ENCODE measurements at regions of chrX and their contacts with region 1.

Region 1: DNA sequence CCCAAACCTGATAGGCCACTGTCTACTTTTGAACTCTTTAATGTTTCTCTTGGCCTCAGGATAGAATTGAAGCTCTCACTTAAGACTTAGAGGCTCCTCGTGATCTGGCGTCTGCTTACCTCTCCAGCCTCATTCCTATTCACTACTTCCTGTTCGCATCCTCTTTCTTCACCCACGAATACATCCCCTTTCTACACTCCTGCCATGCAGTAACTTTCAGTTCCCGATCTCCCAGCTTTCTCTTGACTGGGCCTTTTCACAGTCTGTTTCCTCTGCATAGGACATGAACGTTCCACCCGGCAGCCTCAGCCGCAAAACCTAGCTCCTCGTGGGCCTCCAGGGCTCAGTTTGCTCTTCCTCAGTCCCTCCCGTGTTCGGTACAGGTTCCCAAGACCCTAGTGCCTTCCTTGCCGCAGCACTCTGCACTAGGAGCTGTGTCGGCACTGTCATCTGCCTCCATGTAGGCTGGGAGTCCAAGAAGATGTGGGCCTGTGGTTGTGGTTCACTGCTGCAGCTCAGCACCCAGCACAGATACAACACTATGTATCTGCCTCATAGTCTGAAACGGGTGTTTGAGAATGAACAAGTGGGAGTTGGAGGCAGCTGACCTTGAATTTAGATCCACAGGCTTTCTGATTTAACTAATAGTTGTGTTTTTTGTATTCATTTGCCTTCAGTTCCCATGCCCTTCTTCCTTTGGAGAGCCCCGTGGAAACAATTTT is 15.8 kb downstream of the RPL39 start:
- DNase-seq: no peak
- CTCF ChIP-seq: no peak

Region 2: GRCh38 chrX:119516157-119516702 is 259.4 kb before region 1 on chrX:
- CTCF ChIA-PET with region 1: interaction called, 13 read pairs
- POLR2A ChIA-PET with region 1: no interaction called
- DNase-seq: peak; percentile 80
- CTCF ChIP-seq: peak; percentile 55

Region 3: GRCh38 chrX:119669424-119670037 is 106.1 kb before region 1 on chrX:
- CTCF ChIA-PET with region 1: no interaction called
- POLR2A ChIA-PET with region 1: no interaction called
- DNase-seq: no peak
- CTCF ChIP-seq: no peak

Region 4: GRCh38 chrX:119826399-119826959 is 50.8 kb after region 1 on chrX:
- CTCF ChIA-PET with region 1: no interaction called
- POLR2A ChIA-PET with region 1: no interaction called
- DNase-seq: peak; percentile 12
- CTCF ChIP-seq: no peak

Region 5: DNA sequence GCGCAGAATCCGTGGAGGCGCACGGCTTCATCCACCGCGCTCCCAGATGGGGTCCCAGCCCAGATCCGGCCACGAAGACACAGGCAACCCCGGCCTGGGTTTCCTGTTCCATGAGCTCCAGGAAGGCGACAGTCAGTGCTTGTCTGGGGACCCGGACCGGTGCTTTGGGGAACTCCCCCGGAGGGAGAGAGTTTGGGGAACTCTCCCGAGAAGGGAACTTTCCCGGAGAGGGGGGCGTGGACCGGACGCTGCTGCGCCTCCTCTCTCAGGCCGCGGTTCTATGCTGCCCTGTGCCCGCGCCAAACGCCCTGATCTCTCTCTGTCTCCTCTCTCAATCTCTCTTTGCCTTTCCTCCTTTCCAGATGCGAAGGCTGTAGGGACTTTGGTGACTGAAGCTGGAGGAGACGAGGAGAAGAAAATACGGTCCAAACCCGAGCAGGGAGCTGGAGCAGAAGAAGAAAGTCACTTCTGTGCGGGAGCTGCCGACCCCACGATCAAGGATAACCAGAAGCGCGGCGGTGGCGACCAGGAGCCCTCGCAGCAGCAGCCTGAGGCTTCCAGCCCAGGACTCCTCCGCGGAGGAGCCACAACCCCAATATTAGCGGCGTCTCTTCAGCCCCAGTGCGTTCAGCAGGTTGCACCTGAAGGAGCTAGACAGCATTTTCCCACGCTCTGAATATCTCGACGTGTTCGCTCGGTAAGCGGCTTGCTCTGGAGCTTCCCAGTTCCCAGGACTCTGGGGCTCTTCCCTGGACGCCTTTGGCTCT is 215.5 kb after region 1 on chrX:
- CTCF ChIA-PET with region 1: no interaction called
- POLR2A ChIA-PET with region 1: no interaction called
- DNase-seq: peak; percentile 47
- CTCF ChIP-seq: no peak

Region 6: GRCh38 chrX:120015145-120016067 is 239.7 kb after region 1 on chrX:
- CTCF ChIA-PET with region 1: no interaction called
- POLR2A ChIA-PET with region 1: no interaction called
- DNase-seq: no peak
- CTCF ChIP-seq: no peak

Measured in GM10248 (cell line).